Activated CD4-positive, alpha-beta T cell treated with anti-CD3 and anti-CD28 coated beads, Interleukin-2, amount 10 ng/mL, durations not matched to agents 24 days and 14 days (primary cell): ENCODE measurements at regions of chr3 and their contacts with region 1.

Region 1: DNA sequence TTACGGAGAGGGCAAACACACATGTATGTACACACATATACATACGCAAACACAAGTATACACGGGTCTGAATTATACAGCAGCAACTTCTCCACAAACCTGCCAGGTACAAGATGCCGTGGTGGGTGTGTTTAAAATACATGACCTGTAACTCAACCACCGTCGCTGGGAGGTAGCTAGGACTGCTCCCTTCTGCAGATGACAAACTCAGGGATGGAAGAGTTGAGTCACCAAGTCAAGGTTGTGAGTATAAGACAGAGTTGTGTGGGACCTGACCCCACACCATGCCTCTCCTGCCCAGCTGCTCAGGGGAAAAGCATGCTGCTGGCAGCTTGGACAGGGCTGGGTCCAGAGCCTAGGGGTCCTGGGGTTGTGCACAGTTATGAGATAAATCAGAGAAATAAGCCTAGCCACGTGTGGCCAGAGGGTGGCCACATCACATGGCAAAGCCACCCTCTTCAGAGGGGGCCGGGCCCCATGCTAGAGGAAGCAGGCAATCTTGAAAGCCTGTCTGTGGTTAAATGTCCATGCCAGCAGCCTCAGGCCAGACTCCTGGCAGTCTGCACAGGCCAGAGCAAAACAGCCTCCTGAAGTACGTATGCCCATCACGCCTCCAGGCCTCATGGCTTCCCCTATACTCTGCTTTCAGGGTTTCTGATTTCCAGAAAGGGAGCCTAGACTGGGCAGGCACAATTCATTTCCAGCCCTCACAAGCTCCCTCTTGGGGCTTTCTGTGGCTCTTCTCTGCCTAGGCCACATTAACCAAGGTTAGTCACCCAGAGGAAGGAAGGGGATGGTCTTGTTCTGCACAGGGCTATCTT is 107.7 kb upstream of the RPL32 start:
- DNase-seq: peak; percentile 75
- H3K4me3 Mint-ChIP-seq: peak overlapping the region; percentile 40
- H3K27ac Mint-ChIP-seq: peak overlapping the region; percentile 89
- H3K4me1 Mint-ChIP-seq: peaks cover 30% of the 10 kb centered on the region
- H3K27me3 Mint-ChIP-seq: no peaks in the 10 kb centered on the region

Region 2: GRCh38 chr3:12719984-12720898 is 228.9 kb before region 1 on chr3:
- intact Hi-C with region 1: no loop called
- DNase-seq: peak; percentile 92
- H3K4me3 Mint-ChIP-seq: peak overlapping the region; percentile 60
- H3K27ac Mint-ChIP-seq: no peak overlapping the region
- H3K4me1 Mint-ChIP-seq: peaks cover 5% of the 10 kb centered on the region
- H3K27me3 Mint-ChIP-seq: no peaks in the 10 kb centered on the region

Region 3: GRCh38 chr3:12967606-12968351 is 18.7 kb after region 1 on chr3:
- intact Hi-C with region 1: loop called (anchors 1 kb)
- DNase-seq: peak; percentile 95
- H3K4me3 Mint-ChIP-seq: peak overlapping the region; percentile 68
- H3K27ac Mint-ChIP-seq: peak overlapping the region; percentile 23
- H3K4me1 Mint-ChIP-seq: peaks cover 33% of the 10 kb centered on the region
- H3K27me3 Mint-ChIP-seq: peaks cover 3% of the 10 kb centered on the region